T-cell (primary cell): ENCODE measurements at regions of chr6 and their contacts with region 1.

Region 1: DNA sequence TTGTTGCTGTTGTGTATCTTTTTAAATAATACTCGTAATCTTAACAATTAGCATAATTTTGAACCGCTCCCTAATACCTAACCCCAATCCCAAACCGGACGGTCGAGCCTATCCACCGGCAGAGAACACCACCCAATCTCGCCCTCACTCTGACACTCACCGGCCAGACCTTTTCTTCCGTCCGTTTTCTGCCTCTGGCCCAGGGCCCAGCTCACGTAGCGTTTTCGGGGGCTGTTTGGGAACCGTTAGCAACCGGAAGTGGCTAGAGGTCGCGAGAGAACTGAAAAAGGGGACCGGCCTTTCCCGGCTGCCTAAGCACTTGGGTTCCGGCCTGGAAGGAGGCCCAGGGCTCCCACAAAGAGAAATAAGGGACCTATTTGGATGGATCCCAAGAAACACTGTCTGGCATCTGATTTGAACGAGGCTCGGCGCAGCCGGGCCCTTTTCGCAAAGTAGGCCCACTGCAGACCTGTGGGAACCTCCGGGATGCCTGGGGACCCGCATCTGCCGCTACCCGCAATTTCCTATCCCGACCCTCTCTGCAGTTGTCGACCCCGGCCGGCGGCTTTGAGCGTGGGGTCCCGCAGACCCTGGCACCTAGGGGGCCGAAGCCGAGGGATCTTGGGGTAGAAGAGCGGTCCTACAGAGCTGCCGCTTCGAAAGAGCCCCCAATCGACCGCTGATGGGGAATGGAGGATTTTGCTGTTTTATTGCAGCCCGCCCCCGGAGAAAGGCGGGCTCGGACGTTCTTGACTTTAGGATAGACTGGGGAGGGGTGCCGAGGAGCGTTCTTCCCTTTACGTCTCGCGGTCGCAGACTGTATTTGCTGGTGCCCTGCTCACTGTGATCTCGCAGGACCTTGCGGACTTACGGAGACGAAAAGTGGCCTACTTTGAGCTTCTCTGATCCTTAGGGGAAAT is 4.8 kb upstream of the ZKSCAN8 start:
- DNase-seq: peak; percentile 44 to 85 (median 66)
- ATAC-seq: peak; percentile 40 to 63 (median 54)
- H3K4me3 ChIP-seq: peak overlapping the region; percentile 76 to 92
- H3K4me3 Mint-ChIP-seq: peak overlapping the region; percentile 91 to 95 (median 91)
- H3K27ac ChIP-seq: peak overlapping the region; percentile 96
- H3K27ac Mint-ChIP-seq: peak overlapping the region; percentile 94 to 97
- H3K4me1 ChIP-seq: peaks cover 14 to 24% of the 10 kb centered on the region in 2 experiments
- H3K4me1 Mint-ChIP-seq: peaks cover 76 to 82% (median 81%) of the 10 kb centered on the region in 3 donors
- H3K27me3 ChIP-seq: no peaks in the 10 kb centered on the region
- H3K27me3 Mint-ChIP-seq: no peaks in the 10 kb centered on the region

Region 2: GRCh38 chr6:27994616-27995015 is 142.2 kb before region 1 on chr6:
- CTCF ChIA-PET with region 1: no interaction called
- POLR2A ChIA-PET with region 1: no interaction called
- DNase-seq: no peak
- ATAC-seq: no peak
- H3K4me3 ChIP-seq: no peak overlapping the region
- H3K4me3 Mint-ChIP-seq: no peak overlapping the region
- H3K27ac ChIP-seq: no peak overlapping the region
- H3K27ac Mint-ChIP-seq: no peak overlapping the region
- H3K4me1 ChIP-seq: no peaks in the 10 kb centered on the region
- H3K4me1 Mint-ChIP-seq: no peaks in the 10 kb centered on the region
- H3K27me3 ChIP-seq: peaks cover 0 to 4% of the 10 kb centered on the region in 2 experiments
- H3K27me3 Mint-ChIP-seq: peaks cover 30 to 49% of the 10 kb centered on the region in 2 donors

Region 3: GRCh38 chr6:28053584-28053983 is 83.3 kb before region 1 on chr6:
- CTCF ChIA-PET with region 1: no interaction called
- POLR2A ChIA-PET with region 1: no interaction called
- DNase-seq: no peak
- ATAC-seq: no peak
- H3K4me3 ChIP-seq: no peak overlapping the region
- H3K4me3 Mint-ChIP-seq: no peak overlapping the region
- H3K27ac ChIP-seq: no peak overlapping the region
- H3K27ac Mint-ChIP-seq: no peak overlapping the region
- H3K4me1 ChIP-seq: no peaks in the 10 kb centered on the region
- H3K4me1 Mint-ChIP-seq: no peaks in the 10 kb centered on the region
- H3K27me3 ChIP-seq: peaks cover 0 to 1% of the 10 kb centered on the region in 2 experiments
- H3K27me3 Mint-ChIP-seq: peaks cover 37 to 41% of the 10 kb centered on the region in 2 donors

Region 4: GRCh38 chr6:28078050-28078449 is 58.8 kb before region 1 on chr6:
- CTCF ChIA-PET with region 1: no interaction called
- POLR2A ChIA-PET with region 1: interaction called, 3 to 14 read pairs
- DNase-seq: no peak
- ATAC-seq: no peak
- H3K4me3 ChIP-seq: no peak overlapping the region
- H3K4me3 Mint-ChIP-seq: peak overlapping the region in 1 of 3 donors; percentile 29
- H3K27ac ChIP-seq: no peak overlapping the region
- H3K27ac Mint-ChIP-seq: no peak overlapping the region
- H3K4me1 ChIP-seq: peaks cover 2 to 16% of the 10 kb centered on the region in 2 experiments
- H3K4me1 Mint-ChIP-seq: peaks cover 22 to 35% (median 25%) of the 10 kb centered on the region in 3 donors
- H3K27me3 ChIP-seq: no peaks in the 10 kb centered on the region
- H3K27me3 Mint-ChIP-seq: peaks cover 0 to 2% of the 10 kb centered on the region in 2 donors

Region 5: DNA sequence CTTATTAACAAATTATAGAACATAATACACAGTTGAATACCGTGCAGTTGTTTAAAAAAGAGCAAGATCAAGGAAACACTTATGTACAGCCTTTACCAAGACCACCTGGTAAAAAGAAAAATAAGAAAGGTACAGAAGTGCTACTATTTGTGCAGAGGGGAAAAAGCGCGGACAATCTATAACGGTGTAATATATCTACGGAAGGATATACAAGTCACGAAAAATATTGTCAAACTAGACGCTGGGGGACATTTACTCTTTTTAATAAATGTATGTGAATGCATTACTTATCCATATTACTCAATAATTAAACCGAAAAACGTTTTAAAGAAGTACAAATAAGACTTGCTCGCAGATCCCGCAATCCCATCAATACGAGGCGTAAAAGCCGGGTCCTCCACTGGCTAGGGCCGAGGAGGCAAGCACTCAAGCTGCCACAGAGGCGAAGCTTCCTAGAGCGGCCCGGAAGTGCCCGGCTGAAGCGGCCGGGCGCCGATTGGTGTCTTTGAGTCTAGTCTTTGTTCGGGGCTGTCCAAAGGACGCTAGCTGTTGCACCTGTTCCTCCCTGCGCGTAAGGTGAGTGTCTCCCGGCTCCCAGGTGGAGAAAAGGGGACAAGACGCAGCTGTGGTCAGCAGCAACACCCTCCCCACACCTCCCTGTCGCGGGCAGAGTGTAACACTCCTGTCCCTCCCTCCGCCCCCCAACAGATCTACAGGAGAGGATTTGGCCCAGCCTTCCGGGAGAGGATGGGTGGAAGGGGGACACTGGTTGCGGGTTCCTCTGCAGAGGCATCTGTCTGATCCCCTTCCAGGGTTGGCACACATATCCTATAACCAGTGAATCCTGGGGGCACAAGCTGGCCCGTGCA is 12.5 kb before region 1 on chr6 and contains the start of gene ZSCAN16:
- CTCF ChIA-PET with region 1: interaction called in 1 of 2 experiments, 11 read pairs
- POLR2A ChIA-PET with region 1: interaction called, 5 to 17 read pairs
- DNase-seq: peak; percentile 33 to 80 (median 68)
- ATAC-seq: peak; percentile 72 to 97 (median 92)
- H3K4me3 ChIP-seq: peak within 1 kb of the TSS; percentile 69 to 93
- H3K4me3 Mint-ChIP-seq: peak within 1 kb of the TSS; percentile 91 to 97 (median 97)
- H3K27ac ChIP-seq: peak within 1 kb of the TSS; percentile 87
- H3K27ac Mint-ChIP-seq: peak within 1 kb of the TSS; percentile 95 to 98
- H3K4me1 ChIP-seq: peaks cover 9 to 14% of the 10 kb centered on the region in 2 experiments
- H3K4me1 Mint-ChIP-seq: peaks cover 42 to 62% (median 54%) of the 10 kb centered on the region in 3 donors
- H3K27me3 ChIP-seq: no peaks in the 10 kb centered on the region
- H3K27me3 Mint-ChIP-seq: no peaks in the 10 kb centered on the region
- total RNA-seq, gene ZSCAN16: 5.9 to 13.1 (median 10.7) TPM

Region 6: DNA sequence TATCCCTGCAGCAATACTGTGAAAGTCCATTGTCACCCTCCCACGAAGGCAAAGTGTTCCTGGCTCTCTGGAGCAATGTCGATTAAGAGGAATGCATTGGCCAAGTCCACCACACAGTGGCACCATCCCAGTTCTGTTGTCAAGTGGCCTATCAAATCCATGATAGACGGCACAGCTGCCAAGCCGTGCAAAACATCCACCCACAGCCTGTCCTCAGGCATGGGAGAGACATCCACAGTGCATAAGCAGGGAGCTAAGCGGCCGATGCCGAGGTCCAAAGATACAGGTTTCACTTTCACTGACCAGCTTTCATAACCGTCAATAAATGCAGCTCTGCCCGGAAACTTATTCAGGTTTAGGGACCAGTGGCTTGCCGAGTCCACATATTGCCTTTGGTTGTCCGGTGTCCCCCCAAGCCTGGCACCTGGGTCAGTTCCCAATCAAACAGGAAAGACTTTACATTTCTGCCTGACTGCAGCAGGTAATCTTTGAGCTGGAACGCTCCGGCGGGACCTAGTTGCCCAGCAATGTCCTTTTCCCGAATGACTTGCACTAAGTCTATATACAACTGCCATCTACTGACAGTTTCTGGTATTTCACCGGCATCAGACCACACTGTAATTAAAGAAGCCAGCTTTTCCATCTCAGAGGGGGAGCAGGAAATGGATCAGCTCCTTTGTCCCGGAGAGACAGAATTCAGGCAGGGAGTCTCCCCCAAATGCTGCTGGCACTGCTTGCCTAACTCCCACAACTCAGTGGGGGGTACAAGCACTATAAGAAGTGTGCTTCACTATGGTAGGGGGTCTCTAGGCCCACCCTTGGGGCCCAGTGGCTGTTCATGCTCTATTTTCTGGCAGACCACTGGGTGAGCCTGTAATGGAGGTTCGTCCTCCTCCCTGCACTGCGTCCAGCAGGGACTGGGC is 219.2 kb after region 1 on chr6:
- CTCF ChIA-PET with region 1: interaction called in 1 of 2 experiments, 10 read pairs
- POLR2A ChIA-PET with region 1: no interaction called
- DNase-seq: peak in 34 of 35 experiments; percentile 14 to 83 (median 44)
- ATAC-seq: peak; percentile 78 to 86 (median 81)
- H3K4me3 ChIP-seq: peak overlapping the region; percentile 60 to 74
- H3K4me3 Mint-ChIP-seq: peak overlapping the region; percentile 85 to 91 (median 88)
- H3K27ac ChIP-seq: peak overlapping the region; percentile 39
- H3K27ac Mint-ChIP-seq: peak overlapping the region; percentile 71 to 83
- H3K4me1 ChIP-seq: peaks cover 6 to 23% of the 10 kb centered on the region in 2 experiments
- H3K4me1 Mint-ChIP-seq: peaks cover 33 to 37% (median 37%) of the 10 kb centered on the region in 3 donors
- H3K27me3 ChIP-seq: no peaks in the 10 kb centered on the region
- H3K27me3 Mint-ChIP-seq: no peaks in the 10 kb centered on the region